ENCODE measurements at regions of chr6 and their contacts with region 1.

Region 1: DNA sequence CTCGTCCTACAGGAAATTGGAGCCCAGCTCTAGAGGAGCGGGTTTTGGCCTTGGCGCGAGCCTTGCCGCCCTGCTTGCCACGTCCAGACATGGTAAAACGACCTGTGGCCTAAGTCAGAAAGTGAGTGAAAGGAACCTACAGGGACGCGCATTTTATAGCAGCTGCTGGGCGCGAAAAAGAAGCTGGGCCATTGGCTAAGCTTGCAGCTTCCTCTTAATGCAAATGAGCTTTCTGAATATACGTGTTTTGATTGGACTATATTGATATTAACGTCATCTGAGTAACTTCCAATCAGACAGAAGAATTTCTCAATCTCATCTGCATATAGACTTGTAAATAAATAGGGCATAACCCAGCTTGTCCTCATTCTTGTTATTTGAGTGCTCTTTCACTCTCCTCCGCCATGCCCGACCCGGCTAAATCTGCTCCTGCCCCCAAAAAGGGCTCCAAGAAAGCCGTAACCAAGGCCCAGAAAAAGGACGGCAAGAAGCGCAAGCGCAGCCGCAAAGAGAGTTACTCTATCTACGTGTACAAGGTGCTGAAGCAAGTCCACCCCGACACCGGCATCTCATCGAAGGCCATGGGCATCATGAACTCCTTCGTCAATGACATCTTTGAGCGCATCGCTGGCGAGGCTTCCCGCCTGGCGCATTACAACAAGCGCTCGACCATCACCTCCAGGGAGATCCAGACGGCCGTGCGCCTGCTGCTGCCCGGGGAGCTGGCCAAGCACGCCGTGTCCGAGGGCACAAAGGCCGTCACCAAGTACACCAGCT is 18.9 kb downstream of the OR2B2 start:
- DNase-seq: peak; percentile 96
- H3K27ac ChIP-seq: peak overlapping the region; percentile 98
- CTCF ChIP-seq: no peak

Region 2: GRCh38 chr6:27146706-27147505 is 746.3 kb before region 1 on chr6:
- CTCF ChIA-PET with region 1: no interaction called
- POLR2A ChIA-PET with region 1: interaction called, 12 read pairs
- DNase-seq: peak; percentile 100
- H3K27ac ChIP-seq: peak overlapping the region; percentile 97
- CTCF ChIP-seq: no peak

Region 3: DNA sequence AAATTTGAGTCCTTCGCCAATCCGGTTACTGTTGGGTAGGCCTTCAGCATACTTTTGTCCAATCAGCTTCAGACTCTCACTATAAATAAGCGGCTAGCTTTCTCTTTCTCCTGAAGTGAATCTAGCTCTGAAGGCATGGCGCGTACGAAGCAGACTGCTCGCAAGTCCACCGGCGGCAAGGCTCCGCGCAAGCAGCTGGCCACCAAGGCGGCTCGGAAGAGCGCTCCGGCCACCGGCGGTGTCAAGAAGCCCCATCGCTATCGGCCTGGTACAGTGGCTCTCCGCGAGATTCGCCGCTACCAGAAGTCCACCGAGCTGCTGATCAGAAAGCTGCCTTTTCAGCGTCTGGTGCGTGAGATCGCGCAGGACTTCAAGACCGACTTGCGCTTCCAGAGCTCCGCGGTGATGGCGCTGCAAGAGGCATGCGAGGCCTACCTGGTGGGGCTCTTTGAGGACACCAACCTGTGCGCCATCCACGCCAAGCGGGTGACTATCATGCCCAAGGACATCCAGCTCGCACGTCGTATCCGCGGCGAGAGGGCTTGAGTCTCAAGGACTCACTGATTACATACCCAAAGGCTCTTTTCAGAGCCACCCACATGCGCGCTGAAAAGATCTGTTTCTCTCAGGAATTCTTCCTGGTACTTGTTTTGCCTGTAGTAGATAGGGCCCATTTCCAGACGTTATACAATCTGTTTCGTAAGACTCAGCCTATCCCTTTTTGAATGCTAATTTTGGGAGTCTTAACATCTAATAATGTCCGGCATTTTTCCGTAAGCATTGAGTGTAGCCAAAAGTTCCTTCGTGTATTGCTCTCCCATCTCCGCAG is 83.1 kb before region 1 on chr6:
- CTCF ChIA-PET with region 1: no interaction called
- POLR2A ChIA-PET with region 1: interaction called, 24 read pairs
- DNase-seq: peak; percentile 92
- H3K27ac ChIP-seq: peak overlapping the region; percentile 94
- CTCF ChIP-seq: no peak

Region 4: DNA sequence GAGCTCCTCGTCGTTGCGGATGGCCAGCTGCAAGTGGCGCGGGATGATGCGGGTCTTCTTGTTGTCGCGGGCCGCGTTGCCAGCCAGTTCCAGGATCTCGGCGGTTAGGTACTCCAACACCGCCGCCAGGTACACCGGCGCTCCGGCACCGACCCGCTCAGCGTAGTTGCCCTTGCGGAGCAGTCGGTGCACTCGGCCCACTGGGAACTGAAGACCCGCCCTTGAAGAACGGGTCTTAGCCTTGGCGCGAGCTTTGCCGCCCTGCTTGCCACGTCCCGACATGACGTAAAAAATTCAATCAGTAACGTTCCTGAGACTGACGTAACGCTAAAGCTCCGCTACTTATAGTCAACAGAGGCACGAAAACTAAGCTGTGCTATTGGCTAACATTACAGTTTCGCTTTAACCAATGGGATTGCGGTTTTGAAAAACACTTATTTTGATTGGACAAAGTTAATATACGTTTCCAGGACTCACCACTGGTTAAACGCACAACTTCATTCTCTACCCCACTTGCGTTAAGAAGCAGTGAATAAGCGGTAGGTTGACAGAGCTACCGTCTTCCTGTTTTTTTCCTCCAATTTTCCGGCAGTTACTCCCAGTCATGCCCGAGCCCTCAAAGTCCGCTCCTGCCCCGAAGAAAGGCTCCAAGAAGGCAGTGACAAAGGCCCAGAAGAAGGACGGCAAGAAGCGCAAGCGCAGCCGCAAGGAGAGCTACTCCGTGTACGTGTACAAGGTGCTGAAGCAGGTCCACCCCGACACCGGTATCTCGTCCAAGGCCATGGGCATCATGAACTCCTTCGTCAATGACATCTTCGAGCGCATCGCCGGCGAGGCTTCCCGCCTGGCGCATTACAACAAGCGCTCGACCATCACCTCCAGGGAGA is 54.9 kb before region 1 on chr6:
- CTCF ChIA-PET with region 1: no interaction called
- POLR2A ChIA-PET with region 1: interaction called, 25 read pairs
- DNase-seq: peak; percentile 97
- H3K27ac ChIP-seq: peak overlapping the region; percentile 98
- CTCF ChIP-seq: no peak

Region 5: GRCh38 chr6:27864906-27865849 is 28.1 kb before region 1 on chr6:
- CTCF ChIA-PET with region 1: interaction called, 4 read pairs
- POLR2A ChIA-PET with region 1: interaction called, 29 read pairs
- DNase-seq: peak; percentile 98
- H3K27ac ChIP-seq: peak overlapping the region; percentile 95
- CTCF ChIP-seq: no peak

Region 6: GRCh38 chr6:27871924-27872638 is 21.2 kb before region 1 on chr6:
- CTCF ChIA-PET with region 1: interaction called, 6 read pairs
- POLR2A ChIA-PET with region 1: interaction called, 29 read pairs
- DNase-seq: peak; percentile 97
- H3K27ac ChIP-seq: peak overlapping the region; percentile 96
- CTCF ChIP-seq: peak; percentile 18; the same call in 1 of the 2 replicates

Region 7: DNA sequence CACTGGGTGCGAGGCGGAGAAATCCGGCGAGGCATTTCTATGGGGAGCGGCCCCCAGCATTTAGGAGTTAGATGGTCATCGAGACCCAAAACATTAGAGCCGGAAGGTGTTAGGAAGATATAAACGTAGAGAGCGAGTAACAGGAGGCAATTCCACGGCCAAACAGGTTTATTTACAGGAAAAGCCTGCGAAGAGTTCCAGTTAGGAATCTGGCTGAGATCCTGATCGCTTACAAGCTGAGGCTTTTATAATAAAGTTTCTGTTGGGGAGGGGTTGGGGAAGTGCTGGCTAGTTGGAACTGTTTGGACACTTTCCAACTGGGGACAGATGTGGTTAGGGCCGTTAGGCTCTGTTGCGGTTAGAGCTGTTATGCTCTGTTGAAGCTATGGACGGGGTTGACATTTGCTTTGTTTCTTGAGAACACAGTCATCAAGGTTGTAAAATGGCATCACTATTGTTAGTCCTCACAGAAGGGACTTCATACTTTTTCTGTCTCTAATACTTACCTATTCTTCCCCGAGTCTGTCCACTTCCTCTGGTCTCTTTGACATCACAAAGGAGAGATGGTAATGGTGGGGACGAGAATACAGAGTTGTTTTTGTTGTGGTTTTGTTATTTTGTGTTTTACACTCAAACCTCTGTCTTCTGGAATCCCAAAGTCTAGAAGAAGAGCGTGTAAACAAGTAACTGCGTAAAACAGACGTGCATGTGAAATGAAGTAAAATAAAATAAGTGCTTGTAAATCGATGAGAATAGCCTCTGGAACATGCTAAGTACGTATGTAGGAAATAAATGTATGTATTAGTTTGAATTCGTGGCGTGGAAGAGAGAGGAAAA is 443.3 kb after region 1 on chr6:
- CTCF ChIA-PET with region 1: no interaction called
- POLR2A ChIA-PET with region 1: interaction called, 15 read pairs
- DNase-seq: no peak
- H3K27ac ChIP-seq: peak overlapping the region; percentile 89
- CTCF ChIP-seq: no peak

Measured in RWPE1 (cell line).